Posterior vena cava (tissue), 2 donors: ENCODE measurements at regions of chr1 and their contacts with region 1.

Region 1: GRCh38 chr1:214912127-214912526 is 170.4 kb upstream of the KCNK2 start:
- DNase-seq: no peak

Region 2: GRCh38 chr1:214957330-214958137 is 45.4 kb after region 1 on chr1:
- intact Hi-C with region 1: loop called in 1 of 2 experiments (anchors 1 kb)
- DNase-seq: no peak